Upper lobe of right lung (tissue), 1 donor: ENCODE measurements at regions of chr3 and their contacts with region 1.

Region 1: DNA sequence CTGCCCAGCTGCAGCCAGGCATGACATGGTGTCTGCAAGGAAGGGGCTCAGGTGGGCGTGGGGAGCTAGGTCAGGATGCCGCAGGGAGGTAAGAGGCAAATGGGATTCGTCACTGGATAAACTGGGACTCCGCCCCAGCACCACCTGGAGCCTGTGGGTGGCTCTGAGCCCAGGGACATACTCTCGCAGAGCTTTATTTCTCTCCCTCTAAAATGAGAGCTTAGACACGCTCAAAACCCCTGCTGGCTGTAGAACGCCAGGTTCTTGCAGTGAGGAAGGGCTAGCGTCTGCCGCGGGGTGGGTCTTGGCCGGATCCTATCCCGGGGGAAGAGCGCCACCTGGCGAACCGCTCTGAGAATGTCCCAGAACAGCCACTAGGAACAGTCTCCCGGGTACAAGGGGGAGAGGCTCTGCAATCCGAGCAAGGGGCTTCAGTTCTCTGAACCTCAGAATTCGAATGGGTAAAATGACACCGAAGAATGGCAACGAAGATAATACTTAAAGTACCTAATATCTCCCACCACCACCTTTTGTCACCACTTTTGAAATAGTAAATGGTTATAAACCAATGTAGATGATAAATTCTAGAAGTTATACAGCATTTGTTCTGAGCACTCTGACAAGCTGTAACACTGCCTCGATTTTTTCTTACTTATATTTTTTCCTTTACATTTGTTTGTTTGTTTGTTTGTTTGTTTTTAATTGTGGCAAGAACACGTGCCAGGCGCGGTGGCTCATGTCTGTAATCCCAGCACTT is 53.2 kb upstream of the SRGAP3 start:
- DNase-seq: peak; percentile 87
- ATAC-seq: peak; percentile 98
- H3K4me3 ChIP-seq: peak overlapping the region; percentile 27
- H3K27ac ChIP-seq: no peak overlapping the region
- H3K4me1 ChIP-seq: peaks cover 5% of the 10 kb centered on the region
- H3K27me3 ChIP-seq: no peaks in the 10 kb centered on the region
- CTCF ChIP-seq: peak; percentile 89

Region 2: DNA sequence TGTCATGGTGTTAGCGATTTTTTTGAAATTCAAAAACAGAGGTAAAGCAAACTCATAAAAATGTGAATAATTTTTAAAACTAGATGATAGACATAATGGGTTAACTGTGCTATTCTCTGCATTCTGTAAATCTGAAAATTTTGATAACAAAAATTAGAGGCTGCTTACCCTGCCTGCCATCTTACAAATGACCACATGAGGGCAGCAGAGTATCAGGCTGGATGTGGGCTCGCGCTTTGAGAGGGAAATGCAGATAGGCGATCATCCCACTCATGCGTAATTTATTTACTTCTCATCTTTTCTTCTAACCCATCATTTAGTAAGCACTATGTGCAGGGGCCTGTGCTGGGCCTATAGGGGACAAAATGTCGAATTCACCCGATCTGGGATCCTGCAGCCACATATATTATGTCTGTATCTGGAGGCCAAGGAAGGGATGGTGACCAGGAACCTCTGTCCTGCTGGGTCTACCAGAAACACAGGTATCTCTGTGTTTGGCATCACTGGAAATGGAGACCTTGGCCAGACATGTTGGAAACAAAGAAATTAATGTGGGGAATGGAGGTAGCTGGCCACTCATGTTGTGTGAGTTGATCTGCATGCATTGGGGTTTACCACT is 331.5 kb before region 1 on chr3:
- intact Hi-C with region 1: loop called (anchors 5 kb)
- DNase-seq: no peak
- ATAC-seq: peak; percentile 86
- H3K4me3 ChIP-seq: no peak overlapping the region
- H3K27ac ChIP-seq: no peak overlapping the region
- H3K4me1 ChIP-seq: peaks cover 3% of the 10 kb centered on the region
- H3K27me3 ChIP-seq: peaks cover 7% of the 10 kb centered on the region
- CTCF ChIP-seq: peak; percentile 99

Region 3: DNA sequence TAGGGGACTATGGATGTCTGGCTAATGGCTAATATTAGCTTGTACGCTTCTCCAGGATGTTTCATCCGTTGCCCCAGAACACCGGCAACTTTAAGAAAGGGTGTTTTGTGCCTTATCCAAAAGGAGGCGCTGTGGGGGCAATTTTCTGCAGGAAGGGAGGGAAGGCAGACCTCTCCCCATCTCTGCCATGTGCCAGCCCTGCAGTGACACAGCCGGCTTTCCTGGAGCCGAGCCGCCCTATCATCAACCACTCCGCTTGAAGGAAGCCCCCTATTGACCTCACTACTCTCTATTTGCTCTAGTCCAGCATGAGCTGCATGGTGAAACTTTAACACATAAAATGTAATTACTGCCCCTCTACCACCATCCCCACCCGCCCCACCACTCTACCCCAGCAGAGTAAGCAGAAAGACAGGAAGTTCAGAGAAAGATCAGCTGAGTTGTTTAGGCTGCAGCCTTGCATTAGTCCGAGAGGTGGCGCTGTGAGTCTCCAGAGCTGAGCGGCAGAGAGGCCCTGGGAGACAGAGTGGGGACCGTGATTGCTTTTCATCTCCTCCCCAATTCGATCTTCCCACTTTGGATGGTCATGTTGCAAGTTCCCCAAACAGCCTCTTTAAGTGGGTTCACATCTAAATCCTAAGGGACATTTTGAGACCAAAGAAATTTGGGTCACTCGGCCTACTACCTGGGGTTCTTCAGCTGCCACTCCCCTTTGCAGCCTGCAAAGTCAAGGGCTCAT is 314.8 kb before region 1 on chr3:
- intact Hi-C with region 1: loop called (anchors 5 kb)
- DNase-seq: peak; percentile 78
- ATAC-seq: peak; percentile 90
- H3K4me3 ChIP-seq: no peak overlapping the region
- H3K27ac ChIP-seq: no peak overlapping the region
- H3K4me1 ChIP-seq: peaks cover 4% of the 10 kb centered on the region
- H3K27me3 ChIP-seq: no peaks in the 10 kb centered on the region
- CTCF ChIP-seq: peak; percentile 67

Region 4: GRCh38 chr3:9384141-9384853 is 81.7 kb after region 1 on chr3:
- intact Hi-C with region 1: no loop called
- DNase-seq: no peak
- ATAC-seq: peak; percentile 28
- H3K4me3 ChIP-seq: no peak overlapping the region
- H3K27ac ChIP-seq: no peak overlapping the region
- H3K4me1 ChIP-seq: no peaks in the 10 kb centered on the region
- H3K27me3 ChIP-seq: no peaks in the 10 kb centered on the region
- CTCF ChIP-seq: no peak